ENCODE measurements at regions of chr1 and their contacts with region 1.

Region 1: GRCh38 chr1:107750358-107750959 is 214.5 kb downstream of the VAV3 start:
- DNase-seq: peak; percentile 42 to 52
- H3K4me3 ChIP-seq: no peak overlapping the region
- H3K4me3 Mint-ChIP-seq: no peak overlapping the region
- H3K27ac Mint-ChIP-seq: no peak overlapping the region
- H3K4me1 ChIP-seq: no peaks in the 10 kb centered on the region
- H3K4me1 Mint-ChIP-seq: no peaks in the 10 kb centered on the region
- H3K27me3 ChIP-seq: no peaks in the 10 kb centered on the region
- H3K27me3 Mint-ChIP-seq: peaks cover 1% of the 10 kb centered on the region
- CTCF ChIP-seq: peak; percentile 44 to 54

Region 2: GRCh38 chr1:107430540-107431228 is 319.8 kb before region 1 on chr1:
- CTCF ChIA-PET with region 1: interaction called, 5 read pairs
- POLR2A ChIA-PET with region 1: no interaction called
- intact Hi-C with region 1: loop called (anchors 1 kb)
- DNase-seq: peak; percentile 33 to 44
- H3K4me3 ChIP-seq: no peak overlapping the region
- H3K4me3 Mint-ChIP-seq: no peak overlapping the region
- H3K27ac Mint-ChIP-seq: no peak overlapping the region
- H3K4me1 ChIP-seq: no peaks in the 10 kb centered on the region
- H3K4me1 Mint-ChIP-seq: peaks cover 6% of the 10 kb centered on the region
- H3K27me3 ChIP-seq: no peaks in the 10 kb centered on the region
- H3K27me3 Mint-ChIP-seq: peaks cover 2% of the 10 kb centered on the region
- CTCF ChIP-seq: peak; percentile 63 to 72

Region 3: GRCh38 chr1:107669996-107670395 is 80.5 kb before region 1 on chr1:
- CTCF ChIA-PET with region 1: no interaction called
- POLR2A ChIA-PET with region 1: no interaction called
- intact Hi-C with region 1: loop called (anchors 5 kb)
- DNase-seq: no peak
- H3K4me3 ChIP-seq: no peak overlapping the region
- H3K4me3 Mint-ChIP-seq: no peak overlapping the region
- H3K27ac Mint-ChIP-seq: no peak overlapping the region
- H3K4me1 ChIP-seq: no peaks in the 10 kb centered on the region
- H3K4me1 Mint-ChIP-seq: no peaks in the 10 kb centered on the region
- H3K27me3 ChIP-seq: no peaks in the 10 kb centered on the region
- H3K27me3 Mint-ChIP-seq: no peaks in the 10 kb centered on the region
- CTCF ChIP-seq: no peak

Measured in Caco-2 (cell line).